ENCODE measurements at regions of chr9 and their contacts with region 1.

Region 1: DNA sequence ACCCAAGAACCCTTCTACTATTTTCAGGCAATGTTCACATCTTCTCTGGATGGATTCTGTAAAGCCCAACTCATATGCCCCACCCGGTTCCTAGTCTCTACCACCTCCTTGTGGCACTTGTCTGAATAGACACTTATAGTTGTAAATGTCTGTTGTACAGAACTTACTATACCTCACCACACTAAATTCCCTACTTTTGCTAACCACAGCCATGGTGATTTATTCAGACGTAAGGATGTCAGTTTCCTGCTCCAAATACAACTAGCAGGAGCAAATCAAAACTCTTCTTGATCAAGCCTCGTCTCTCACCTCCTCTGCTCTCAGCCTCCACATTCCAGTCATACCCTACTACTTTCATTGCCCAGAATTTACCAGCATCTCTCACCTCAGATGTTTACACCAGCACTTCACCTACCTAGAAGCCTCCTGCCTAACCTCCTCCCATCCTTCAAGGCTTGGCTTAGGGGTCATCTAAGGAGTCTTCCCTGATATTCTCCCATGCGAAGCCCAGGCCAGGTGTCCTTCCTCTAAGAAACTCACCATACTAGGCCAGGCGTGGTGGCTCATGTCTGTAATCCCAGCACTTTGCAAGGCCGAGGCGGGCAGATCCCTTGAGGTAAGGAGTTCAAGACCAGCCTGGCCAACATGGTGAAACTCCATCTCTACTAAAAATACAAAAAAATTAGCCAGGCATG is 75.5 kb downstream of the MAPKAP1 start:
- DNase-seq: no peak
- ATAC-seq: peak; percentile 49
- H3K4me3 ChIP-seq: peak overlapping the region; percentile 32; the same call in 1 of the 2 replicates
- H3K27ac ChIP-seq: peak overlapping the region; percentile 98
- H3K4me1 ChIP-seq: peaks cover 75% of the 10 kb centered on the region
- H3K27me3 ChIP-seq: no peaks in the 10 kb centered on the region
- CTCF ChIP-seq: peak; percentile 69 to 74 (median 70)
- EP300 ChIP-seq: no peak
- POLR2A ChIP-seq: no peak
- RAD21 ChIP-seq: peak; percentile 92

Region 2: DNA sequence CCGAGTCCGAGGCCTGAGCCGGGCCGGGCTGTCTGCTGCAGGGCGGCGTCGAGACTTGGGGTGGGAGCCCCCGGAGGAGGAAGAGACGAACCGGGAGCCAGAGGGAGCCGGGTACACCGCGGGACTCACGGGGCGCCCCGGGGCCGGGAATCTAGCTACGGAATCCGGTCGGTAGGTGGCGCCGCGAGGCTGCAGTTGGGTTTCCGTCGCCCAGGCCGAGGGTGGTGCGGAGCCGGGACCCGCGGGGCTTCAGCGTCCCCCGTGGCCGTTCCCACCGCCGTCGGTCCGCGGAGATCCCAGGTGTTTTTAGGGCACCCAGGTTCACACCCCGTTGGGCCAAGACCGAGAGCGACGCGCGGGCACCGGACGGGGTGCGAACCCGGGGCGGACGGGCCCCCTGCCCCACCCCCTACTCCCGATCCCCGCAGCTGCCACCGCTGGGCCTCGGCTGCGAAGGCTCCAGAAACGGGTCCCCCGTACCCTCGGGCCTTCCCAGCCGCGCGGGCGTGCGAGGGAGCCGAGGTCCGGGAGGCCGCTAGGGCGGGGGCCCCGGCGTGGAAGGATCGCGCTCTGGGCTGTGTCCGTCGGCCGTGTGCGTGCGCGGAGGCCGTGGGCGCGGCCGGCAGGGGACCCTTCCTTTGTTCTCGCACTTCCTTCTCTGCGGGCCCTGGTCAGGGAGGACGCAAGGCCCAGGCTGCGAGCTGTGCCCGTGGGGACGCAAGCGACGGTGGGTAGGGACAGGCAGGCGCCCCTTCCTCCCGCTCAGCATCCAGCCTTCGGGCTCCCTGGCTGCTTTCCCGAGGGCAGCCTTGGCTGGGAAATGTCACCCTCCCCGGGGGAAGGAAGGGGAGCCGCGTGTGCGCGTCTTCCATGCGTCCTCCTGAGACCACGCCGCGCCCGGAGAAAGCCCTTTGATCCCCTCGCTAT is 223.3 kb before region 1 on chr9:
- CTCF ChIA-PET with region 1: interaction called, 16 read pairs
- POLR2A ChIA-PET with region 1: interaction called, 3 read pairs
- RAD21 ChIA-PET with region 1: interaction called, 10 read pairs
- SMC1A ChIA-PET with region 1: interaction called, 6 read pairs
- in situ Hi-C with region 1: no loop called
- intact Hi-C with region 1: loop called (anchors 1 kb)
- DNase-seq: no peak
- ATAC-seq: peak; percentile 93
- H3K4me3 ChIP-seq: peak overlapping the region; percentile 70; the same call in 1 of the 2 replicates
- H3K27ac ChIP-seq: no peak overlapping the region
- H3K4me1 ChIP-seq: peaks cover 10% of the 10 kb centered on the region
- H3K27me3 ChIP-seq: no peaks in the 10 kb centered on the region
- CTCF ChIP-seq: peak; percentile 75 to 95 (median 87); a peak in 5 of 6 replicates
- EP300 ChIP-seq: no peak
- POLR2A ChIP-seq: peak; percentile 27; the same call in 1 of the 2 replicates
- RAD21 ChIP-seq: peak; percentile 87

Region 3: DNA sequence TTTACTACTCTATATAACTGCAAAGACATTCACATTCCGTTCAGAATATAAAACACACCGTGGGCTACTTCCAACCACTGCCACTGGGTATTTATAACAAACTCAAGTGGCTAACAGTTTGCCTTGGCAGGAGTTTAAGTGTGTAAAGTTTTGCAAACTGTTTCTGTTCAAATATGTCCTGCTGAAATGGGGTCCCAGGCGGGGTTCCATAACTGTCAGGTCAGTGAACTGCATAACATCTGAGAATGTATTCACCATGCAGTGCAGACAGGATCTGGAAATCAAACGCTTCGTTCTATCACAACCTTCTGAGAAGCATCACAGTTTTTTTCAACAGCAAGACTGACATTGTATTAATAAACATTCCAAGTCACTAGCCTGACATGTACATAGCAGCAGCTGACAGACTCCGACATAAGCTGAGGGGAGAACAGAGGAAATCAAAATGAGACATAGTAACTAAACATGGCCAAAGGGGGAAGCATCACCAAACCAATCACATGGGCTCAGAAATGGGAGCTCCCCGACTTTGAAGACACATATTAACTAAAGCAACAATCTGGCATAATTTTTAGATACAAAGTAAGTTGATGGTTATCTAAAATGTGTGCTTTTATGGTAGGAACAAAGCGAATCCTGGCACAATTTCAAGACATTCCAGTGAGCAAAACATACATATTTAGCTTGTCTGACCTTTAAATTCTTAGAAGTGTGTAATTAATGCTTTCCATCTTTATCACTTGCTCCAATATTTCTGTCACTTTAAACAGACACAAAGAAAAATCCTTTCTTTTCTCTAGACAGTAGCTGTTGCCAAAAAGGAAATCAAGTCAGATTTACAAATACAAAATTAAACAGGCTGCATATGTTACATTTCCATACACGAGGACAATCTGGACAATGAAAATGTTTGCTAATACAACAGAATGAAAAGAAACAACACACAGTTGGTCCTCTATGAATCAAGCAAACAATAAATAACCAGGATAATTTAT is 81.3 kb before region 1 on chr9:
- CTCF ChIA-PET with region 1: interaction called, 6 read pairs
- POLR2A ChIA-PET with region 1: no interaction called
- RAD21 ChIA-PET with region 1: interaction called, 4 read pairs
- SMC1A ChIA-PET with region 1: interaction called, 10 read pairs
- in situ Hi-C with region 1: loop called (anchors 5 kb)
- intact Hi-C with region 1: no loop called
- DNase-seq: no peak
- ATAC-seq: no peak
- H3K4me3 ChIP-seq: no peak overlapping the region
- H3K27ac ChIP-seq: no peak overlapping the region
- H3K4me1 ChIP-seq: no peaks in the 10 kb centered on the region
- H3K27me3 ChIP-seq: no peaks in the 10 kb centered on the region
- CTCF ChIP-seq: no peak
- EP300 ChIP-seq: no peak
- POLR2A ChIP-seq: no peak
- RAD21 ChIP-seq: no peak

Region 4: GRCh38 chr9:125683486-125683885 is 51.9 kb after region 1 on chr9:
- CTCF ChIA-PET with region 1: interaction called, 3 read pairs
- POLR2A ChIA-PET with region 1: interaction called, 4 read pairs
- RAD21 ChIA-PET with region 1: interaction called, 11 read pairs
- SMC1A ChIA-PET with region 1: interaction called, 9 read pairs
- in situ Hi-C with region 1: no loop called
- intact Hi-C with region 1: no loop called
- DNase-seq: no peak
- ATAC-seq: no peak
- H3K4me3 ChIP-seq: no peak overlapping the region
- H3K27ac ChIP-seq: no peak overlapping the region
- H3K4me1 ChIP-seq: peaks cover 19% of the 10 kb centered on the region; the same call in 1 of the 2 replicates
- H3K27me3 ChIP-seq: no peaks in the 10 kb centered on the region
- CTCF ChIP-seq: no peak
- EP300 ChIP-seq: no peak
- POLR2A ChIP-seq: no peak
- RAD21 ChIP-seq: no peak

Region 5: DNA sequence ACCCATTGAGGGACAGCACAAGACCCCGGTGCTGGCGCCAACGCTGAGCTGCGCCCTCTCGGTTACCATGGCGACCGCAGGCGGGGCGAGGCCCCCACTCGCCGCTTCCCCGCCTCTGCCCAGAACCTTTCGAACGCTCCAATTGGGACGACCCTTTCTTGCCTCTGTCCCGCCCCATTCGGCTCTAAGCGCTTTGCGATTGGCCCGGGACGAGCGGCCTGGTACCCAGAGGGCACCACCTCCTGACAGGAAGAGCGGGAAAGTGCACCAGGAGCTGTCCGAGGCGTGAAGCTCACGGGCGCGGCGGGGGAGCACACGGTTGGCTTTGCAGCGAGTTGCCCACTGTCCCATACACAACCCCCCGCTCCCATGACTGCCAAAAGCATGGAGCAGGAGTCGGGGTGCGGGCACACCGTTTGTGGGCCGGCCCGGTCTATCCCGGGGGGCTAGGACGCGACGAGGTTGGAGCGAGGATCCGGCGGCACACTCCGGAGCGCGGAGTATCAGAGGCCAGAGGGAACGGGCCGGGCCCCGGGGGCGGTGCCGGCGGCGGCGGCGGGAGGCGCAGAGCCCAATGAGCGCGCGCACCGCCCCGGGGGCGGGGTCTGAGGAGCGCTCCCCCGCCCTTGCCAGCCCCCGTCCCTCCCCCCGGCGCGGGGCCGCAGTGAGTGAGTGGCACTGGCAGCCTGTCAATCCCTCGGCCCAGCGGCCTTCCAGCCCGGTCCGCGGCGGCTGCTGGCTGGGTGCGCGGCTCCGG is 114.7 kb after region 1 on chr9:
- CTCF ChIA-PET with region 1: interaction called, 5 read pairs
- POLR2A ChIA-PET with region 1: interaction called, 4 read pairs
- RAD21 ChIA-PET with region 1: interaction called, 22 read pairs
- SMC1A ChIA-PET with region 1: interaction called, 19 read pairs
- in situ Hi-C with region 1: no loop called
- intact Hi-C with region 1: loop called (anchors 1 kb)
- DNase-seq: peak; percentile 82
- ATAC-seq: peak; percentile 86
- H3K4me3 ChIP-seq: peak overlapping the region; percentile 81; the same call in 1 of the 2 replicates
- H3K27ac ChIP-seq: peak overlapping the region; percentile 74
- H3K4me1 ChIP-seq: peaks cover 7% of the 10 kb centered on the region
- H3K27me3 ChIP-seq: no peaks in the 10 kb centered on the region
- CTCF ChIP-seq: no peak
- EP300 ChIP-seq: no peak
- POLR2A ChIP-seq: peak; percentile 85
- RAD21 ChIP-seq: no peak

Measured in GM12878 (cell line).